ENCODE measurements at regions of chr22 and their contacts with region 1.

Region 1: GRCh38 chr22:35231585-35232084 is 25.7 kb upstream of the HMGXB4 start:
- DNase-seq: peak; percentile 61
- H3K4me3 ChIP-seq: no peak overlapping the region
- H3K27ac ChIP-seq: no peak overlapping the region
- H3K4me1 ChIP-seq: no peaks in the 10 kb centered on the region
- H3K27me3 ChIP-seq: peaks cover 2 to 6% of the 10 kb centered on the region in 2 experiments
- CTCF ChIP-seq: peak; percentile 93 to 94
- POLR2A ChIP-seq: no peak

Region 2: GRCh38 chr22:33920927-33921524 is 1310.6 kb before region 1 on chr22:
- CTCF ChIA-PET with region 1: interaction called, 10 read pairs
- POLR2A ChIA-PET with region 1: no interaction called
- dilution Hi-C with region 1: no loop called
- intact Hi-C with region 1: loop called (anchors 5 kb)
- DNase-seq: peak; percentile 84
- H3K4me3 ChIP-seq: peak overlapping the region in 2 of 3 experiments; percentile 33 to 46
- H3K27ac ChIP-seq: no peak overlapping the region
- H3K4me1 ChIP-seq: peaks cover 4% of the 10 kb centered on the region
- H3K27me3 ChIP-seq: peaks cover 26 to 29% of the 10 kb centered on the region in 2 experiments
- CTCF ChIP-seq: no peak
- POLR2A ChIP-seq: no peak

Region 3: DNA sequence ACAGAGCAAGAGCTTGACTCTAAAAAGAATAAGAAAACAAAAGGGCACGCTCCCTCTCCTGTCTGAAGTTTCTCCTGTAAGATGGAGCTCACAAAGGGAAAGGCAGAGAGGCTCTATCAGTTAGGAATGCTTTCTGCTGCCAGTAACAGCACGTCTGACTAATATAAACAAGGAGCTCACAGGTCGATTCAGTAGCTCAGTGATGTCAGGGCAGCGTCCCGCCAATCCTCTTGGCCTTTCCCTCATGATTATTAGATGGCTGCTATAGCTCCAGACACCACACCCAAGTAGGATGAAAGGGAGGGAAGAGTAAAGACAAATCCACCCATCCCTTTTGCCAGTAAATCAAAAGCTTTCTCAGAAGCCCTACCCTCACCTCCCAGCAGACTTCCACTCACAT is 25.7 kb before region 1 on chr22:
- CTCF ChIA-PET with region 1: interaction called, 14 read pairs
- POLR2A ChIA-PET with region 1: no interaction called
- dilution Hi-C with region 1: no loop called
- intact Hi-C with region 1: no loop called
- DNase-seq: no peak
- H3K4me3 ChIP-seq: no peak overlapping the region
- H3K27ac ChIP-seq: no peak overlapping the region
- H3K4me1 ChIP-seq: no peaks in the 10 kb centered on the region
- H3K27me3 ChIP-seq: peaks cover 0 to 2% of the 10 kb centered on the region in 2 experiments
- CTCF ChIP-seq: no peak
- POLR2A ChIP-seq: no peak

Region 4: GRCh38 chr22:35217527-35217926 is 14.1 kb before region 1 on chr22:
- CTCF ChIA-PET with region 1: interaction called, 40 read pairs
- POLR2A ChIA-PET with region 1: no interaction called
- dilution Hi-C with region 1: no loop called
- intact Hi-C with region 1: no loop called
- DNase-seq: no peak
- H3K4me3 ChIP-seq: no peak overlapping the region
- H3K27ac ChIP-seq: no peak overlapping the region
- H3K4me1 ChIP-seq: no peaks in the 10 kb centered on the region
- H3K27me3 ChIP-seq: no peaks in the 10 kb centered on the region
- CTCF ChIP-seq: no peak
- POLR2A ChIP-seq: no peak

Measured in endothelial cell of umbilical vein (primary cell).